ENCODE measurements at regions of chr5 and their contacts with region 1.

Region 1: GRCh38 chr5:64784451-64785025 is 15.8 kb downstream of the CWC27 start:
- DNase-seq: peak; percentile 47 to 88 (median 64)
- ATAC-seq: peak; percentile 80
- H3K4me3 ChIP-seq: no peak overlapping the region
- H3K4me3 Mint-ChIP-seq: no peak overlapping the region
- H3K27ac ChIP-seq: no peak overlapping the region
- H3K27ac Mint-ChIP-seq: no peak overlapping the region
- H3K4me1 ChIP-seq: no peaks in the 10 kb centered on the region
- H3K4me1 Mint-ChIP-seq: peaks cover 6% of the 10 kb centered on the region
- H3K27me3 ChIP-seq: no peaks in the 10 kb centered on the region
- H3K27me3 Mint-ChIP-seq: no peaks in the 10 kb centered on the region
- CTCF ChIP-seq: peak; percentile 99

Region 2: DNA sequence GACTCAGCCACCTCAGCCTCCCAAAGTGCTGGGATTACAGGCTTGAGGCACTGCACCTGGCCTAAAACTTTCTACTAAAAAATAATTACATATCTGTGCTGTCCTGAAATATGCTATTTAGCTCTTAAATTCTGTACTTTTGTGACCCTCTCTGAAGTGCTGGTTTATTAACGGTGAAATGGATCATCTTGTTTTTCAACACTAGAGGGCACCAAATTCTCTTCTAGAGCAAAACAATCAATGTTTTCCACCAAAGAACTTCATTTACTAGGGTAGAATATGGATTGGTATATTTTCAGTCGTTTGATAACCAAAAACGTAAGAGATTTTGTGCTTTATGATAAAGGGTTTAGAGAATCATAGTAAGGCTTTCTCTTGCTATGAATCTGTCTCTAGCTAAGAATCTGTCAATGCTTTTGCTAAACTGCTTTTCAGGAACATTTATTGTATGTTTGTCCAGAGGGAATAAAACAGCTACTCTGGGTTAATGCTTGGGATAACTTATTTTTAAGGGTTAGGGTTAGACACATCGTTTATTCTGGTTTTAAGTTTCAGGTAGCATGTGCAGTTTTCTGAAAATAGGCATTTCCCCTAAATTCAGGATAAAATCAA is 555.3 kb before region 1 on chr5:
- CTCF ChIA-PET with region 1: no interaction called
- POLR2A ChIA-PET with region 1: no interaction called
- intact Hi-C with region 1: loop called in 1 of 2 experiments (anchors 1 kb)
- DNase-seq: peak in 2 of 14 experiments; percentile 5 to 8
- ATAC-seq: no peak
- H3K4me3 ChIP-seq: no peak overlapping the region
- H3K4me3 Mint-ChIP-seq: no peak overlapping the region
- H3K27ac ChIP-seq: no peak overlapping the region
- H3K27ac Mint-ChIP-seq: no peak overlapping the region
- H3K4me1 ChIP-seq: no peaks in the 10 kb centered on the region
- H3K4me1 Mint-ChIP-seq: no peaks in the 10 kb centered on the region
- H3K27me3 ChIP-seq: no peaks in the 10 kb centered on the region
- H3K27me3 Mint-ChIP-seq: peaks cover 4% of the 10 kb centered on the region
- CTCF ChIP-seq: peak; percentile 62

Region 3: GRCh38 chr5:64634997-64635686 is 149.4 kb before region 1 on chr5:
- CTCF ChIA-PET with region 1: interaction called, 4 read pairs
- POLR2A ChIA-PET with region 1: no interaction called
- intact Hi-C with region 1: loop called (anchors 1 kb)
- DNase-seq: peak in 3 of 14 experiments; percentile 36 to 63 (median 52)
- ATAC-seq: peak; percentile 39
- H3K4me3 ChIP-seq: no peak overlapping the region
- H3K4me3 Mint-ChIP-seq: no peak overlapping the region
- H3K27ac ChIP-seq: no peak overlapping the region
- H3K27ac Mint-ChIP-seq: no peak overlapping the region
- H3K4me1 ChIP-seq: no peaks in the 10 kb centered on the region
- H3K4me1 Mint-ChIP-seq: no peaks in the 10 kb centered on the region
- H3K27me3 ChIP-seq: peaks cover 0 to 8% of the 10 kb centered on the region in 2 experiments
- H3K27me3 Mint-ChIP-seq: peaks cover 30% of the 10 kb centered on the region
- CTCF ChIP-seq: peak; percentile 88